ENCODE measurements at regions of chr5 and their contacts with region 1.

Region 1: DNA sequence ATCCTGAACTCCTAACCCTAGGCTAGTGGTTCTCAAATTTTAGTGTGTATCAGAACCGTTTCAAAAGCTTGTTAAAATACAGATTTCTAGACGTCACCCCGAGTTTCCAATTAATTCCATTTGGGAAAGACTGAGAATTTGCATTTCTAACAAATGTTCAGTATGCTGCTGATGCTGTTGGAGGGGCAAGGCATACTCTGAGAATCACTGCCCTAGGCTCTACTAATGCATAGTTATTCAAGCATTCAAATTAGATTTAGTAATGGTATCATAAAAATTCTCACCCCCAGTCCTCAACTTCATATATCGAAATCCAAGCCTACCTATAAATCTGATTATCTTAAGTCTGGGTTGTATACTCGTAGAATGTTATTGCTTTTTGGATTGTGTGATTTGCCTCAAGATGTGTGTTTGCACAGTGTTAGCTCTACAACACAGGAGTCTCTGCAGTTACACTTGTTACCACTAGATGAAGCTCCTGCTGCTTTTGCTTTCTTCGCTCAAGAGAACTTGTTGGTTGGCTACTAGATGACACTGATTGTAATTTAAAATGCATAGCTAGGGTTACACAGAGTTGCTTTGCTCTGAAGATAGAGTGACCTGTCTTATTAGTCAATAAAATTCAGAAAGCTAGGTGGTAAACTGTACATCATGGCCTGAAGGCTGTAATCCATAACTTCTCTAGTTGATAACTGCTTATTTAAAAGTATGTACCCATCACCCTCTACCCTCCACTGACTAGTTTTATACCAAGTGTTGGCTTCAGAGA is 7.5 kb upstream of the ERAP2 start:
- DNase-seq: peak; percentile 62
- ATAC-seq: peak; percentile 95
- H3K4me3 ChIP-seq: no peak overlapping the region
- H3K27ac ChIP-seq: no peak overlapping the region
- H3K4me1 ChIP-seq: peaks cover 58% of the 10 kb centered on the region
- H3K27me3 ChIP-seq: no peaks in the 10 kb centered on the region; a peak in 1 of 5 replicates
- CTCF ChIP-seq: peak; percentile 89
- EP300 ChIP-seq: no peak
- POLR2A ChIP-seq: no peak
- RAD21 ChIP-seq: peak; percentile 71

Region 2: GRCh38 chr5:96901384-96901783 is 32.6 kb after region 1 on chr5:
- CTCF ChIA-PET with region 1: no interaction called
- POLR2A ChIA-PET with region 1: no interaction called
- in situ Hi-C with region 1: no loop called
- intact Hi-C with region 1: loop called (anchors 2 kb)
- DNase-seq: peak; percentile 20
- ATAC-seq: peak; percentile 77
- H3K4me3 ChIP-seq: no peak overlapping the region
- H3K27ac ChIP-seq: no peak overlapping the region
- H3K4me1 ChIP-seq: no peaks in the 10 kb centered on the region
- H3K27me3 ChIP-seq: no peaks in the 10 kb centered on the region
- CTCF ChIP-seq: peak; percentile 26; the same call in 1 of the 2 replicates
- EP300 ChIP-seq: no peak
- POLR2A ChIP-seq: no peak
- RAD21 ChIP-seq: no peak

Region 3: DNA sequence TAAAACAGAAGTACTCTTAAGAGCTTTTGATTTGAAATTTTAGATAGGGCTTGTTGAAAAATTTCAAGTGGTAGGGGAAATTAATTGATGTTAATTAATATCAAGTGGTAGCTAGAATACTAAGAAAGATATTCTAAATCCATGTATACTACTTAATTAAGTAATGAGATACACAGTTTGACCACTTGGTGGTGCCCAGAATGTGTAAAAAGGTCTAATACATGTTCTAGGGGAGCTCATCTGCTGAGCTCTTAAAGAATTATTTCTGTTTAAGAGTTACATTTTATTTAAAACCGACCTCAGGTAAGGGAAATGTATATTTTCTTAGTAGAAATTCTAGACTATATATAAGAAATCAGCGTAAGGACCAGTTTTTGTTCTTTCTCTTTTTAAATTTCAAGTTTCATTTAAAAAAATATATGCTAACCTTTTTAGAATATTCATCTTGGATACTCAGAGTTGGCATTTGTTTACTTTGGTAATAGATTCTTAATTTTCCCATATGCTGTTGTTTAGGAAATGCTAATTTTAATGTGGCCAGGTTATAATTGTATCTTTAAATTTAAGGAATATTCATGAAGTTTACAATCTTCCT is 128.6 kb after region 1 on chr5:
- CTCF ChIA-PET with region 1: no interaction called
- POLR2A ChIA-PET with region 1: no interaction called
- in situ Hi-C with region 1: no loop called
- intact Hi-C with region 1: loop called (anchors 5 kb)
- DNase-seq: peak; percentile 41
- ATAC-seq: peak; percentile 77
- H3K4me3 ChIP-seq: no peak overlapping the region
- H3K27ac ChIP-seq: no peak overlapping the region
- H3K4me1 ChIP-seq: peaks cover 10% of the 10 kb centered on the region
- H3K27me3 ChIP-seq: no peaks in the 10 kb centered on the region
- CTCF ChIP-seq: peak; percentile 40; the same call in 1 of the 2 replicates
- EP300 ChIP-seq: no peak
- POLR2A ChIP-seq: no peak
- RAD21 ChIP-seq: no peak

Region 4: DNA sequence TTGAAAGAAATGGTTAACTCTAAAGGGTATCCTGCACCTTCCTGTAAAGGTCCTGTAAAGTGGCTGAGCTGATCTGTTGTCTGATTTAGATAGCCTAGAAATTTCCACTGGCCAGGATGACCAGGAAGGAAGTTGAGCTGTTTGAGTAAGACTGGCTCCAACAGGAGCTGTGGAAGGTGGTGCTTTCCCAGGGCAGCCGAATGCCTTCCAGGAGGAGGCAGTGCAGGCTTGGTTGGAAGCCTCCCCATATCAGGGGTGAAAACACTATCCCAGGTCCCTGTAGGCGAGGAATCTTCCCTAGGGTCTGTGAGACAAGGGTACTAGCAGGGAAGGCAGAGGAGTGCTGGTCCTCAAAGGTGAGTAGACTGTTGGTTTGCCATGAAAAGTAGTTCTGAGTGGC is 175.3 kb after region 1 on chr5:
- CTCF ChIA-PET with region 1: no interaction called
- POLR2A ChIA-PET with region 1: no interaction called
- in situ Hi-C with region 1: no loop called
- intact Hi-C with region 1: loop called (anchors 5 kb)
- DNase-seq: peak; percentile 27
- ATAC-seq: peak; percentile 97
- H3K4me3 ChIP-seq: no peak overlapping the region
- H3K27ac ChIP-seq: no peak overlapping the region
- H3K4me1 ChIP-seq: peaks cover 23% of the 10 kb centered on the region
- H3K27me3 ChIP-seq: no peaks in the 10 kb centered on the region
- CTCF ChIP-seq: peak; percentile 84
- EP300 ChIP-seq: no peak
- POLR2A ChIP-seq: no peak
- RAD21 ChIP-seq: peak; percentile 46

Region 5: DNA sequence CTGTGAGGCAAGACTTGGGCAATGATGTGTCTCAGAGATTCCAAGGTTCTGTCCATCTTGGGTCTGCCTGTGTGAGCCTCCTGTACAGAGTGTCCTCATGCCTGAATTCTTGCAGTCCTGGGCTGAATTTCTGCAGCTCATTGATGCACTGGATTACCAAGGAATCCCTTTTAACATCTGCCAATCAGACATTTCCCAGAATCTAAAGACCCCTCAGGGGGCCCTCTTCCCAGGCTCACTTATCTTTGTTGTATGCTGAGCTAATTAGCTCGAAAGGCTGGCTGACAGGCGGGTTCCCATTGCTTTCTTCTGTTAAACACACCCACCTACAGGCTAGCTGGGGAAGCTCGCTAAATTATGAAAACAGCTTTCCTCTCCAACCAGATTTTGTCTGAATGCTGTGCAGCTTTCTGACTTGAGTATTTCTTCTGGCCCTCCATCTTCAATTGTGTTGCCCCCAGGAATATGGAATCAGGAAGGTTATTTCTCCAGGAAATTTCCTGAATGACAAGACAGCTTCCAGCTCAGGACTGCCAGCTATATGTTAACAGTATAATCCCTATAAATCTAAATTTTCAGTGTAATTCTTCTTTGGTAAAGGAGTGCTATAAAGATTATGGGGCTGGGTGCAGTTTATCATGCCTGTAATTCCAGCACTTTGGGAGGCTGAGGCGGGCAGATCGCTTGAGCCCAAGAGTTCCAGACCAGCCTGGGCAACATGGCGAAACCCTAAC is 273.9 kb after region 1 on chr5 and contains the start of gene LIX1:
- CTCF ChIA-PET with region 1: no interaction called
- POLR2A ChIA-PET with region 1: no interaction called
- in situ Hi-C with region 1: no loop called
- intact Hi-C with region 1: loop called (anchors 5 kb)
- DNase-seq: peak; percentile 27
- ATAC-seq: peak; percentile 97
- H3K4me3 ChIP-seq: no peak within 1 kb of the TSS
- H3K27ac ChIP-seq: no peak within 1 kb of the TSS
- H3K4me1 ChIP-seq: no peaks in the 10 kb centered on the region
- H3K27me3 ChIP-seq: no peaks in the 10 kb centered on the region
- CTCF ChIP-seq: peak; percentile 69
- EP300 ChIP-seq: no peak
- POLR2A ChIP-seq: no peak
- RAD21 ChIP-seq: peak; percentile 45; the same call in 1 of the 2 replicates
- total RNA-seq, gene LIX1: not detected in 2 replicates

Measured in HepG2 (cell line).